ENCODE measurements at regions of chr20 and their contacts with region 1.

Region 1: GRCh38 chr20:36550797-36551299 is 9.5 kb downstream of the MYL9 start:
- DNase-seq: no peak
- H3K4me3 ChIP-seq: no peak overlapping the region
- H3K27ac ChIP-seq: peak overlapping the region; percentile 31 to 99 (median 62)
- H3K4me1 ChIP-seq: peaks cover 0 to 5% (median 0%) of the 10 kb centered on the region in 4 donors
- H3K27me3 ChIP-seq: no peaks in the 10 kb centered on the region
- CTCF ChIP-seq: no peak
- EP300 ChIP-seq: no peak
- POLR2A ChIP-seq: peak; percentile 17

Region 2: DNA sequence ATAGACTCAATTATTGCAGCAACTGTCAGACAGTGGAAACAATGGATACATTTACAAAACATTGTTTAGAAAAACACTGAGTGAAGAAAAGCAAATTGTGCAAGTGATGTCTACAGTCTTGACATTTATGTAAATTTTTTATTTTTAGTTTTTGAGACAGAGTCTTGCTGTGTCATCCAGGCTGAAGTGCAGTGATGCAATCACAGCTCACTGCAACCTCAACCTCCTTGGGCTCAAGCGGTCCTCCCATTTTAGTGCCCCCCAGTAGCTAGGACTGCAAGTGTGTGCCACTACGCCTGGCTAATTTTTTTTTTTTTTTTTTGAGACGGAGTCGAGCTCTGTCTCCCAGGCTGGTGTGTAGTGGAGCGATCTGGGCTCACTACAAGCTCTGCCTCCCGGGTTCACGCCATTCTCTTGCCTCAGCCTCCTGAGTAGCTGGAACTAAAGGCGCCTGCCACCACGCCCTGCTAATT is 572.8 kb before region 1 on chr20:
- in situ Hi-C with region 1: no loop called
- intact Hi-C with region 1: no loop called
- DNase-seq: no peak
- H3K4me3 ChIP-seq: no peak overlapping the region
- H3K27ac ChIP-seq: no peak overlapping the region
- H3K4me1 ChIP-seq: no peaks in the 10 kb centered on the region
- H3K27me3 ChIP-seq: no peaks in the 10 kb centered on the region
- CTCF ChIP-seq: no peak
- EP300 ChIP-seq: no peak
- POLR2A ChIP-seq: no peak

Region 3: GRCh38 chr20:36145877-36146707 is 404.8 kb before region 1 on chr20:
- in situ Hi-C with region 1: no loop called
- intact Hi-C with region 1: no loop called
- DNase-seq: no peak
- H3K4me3 ChIP-seq: no peak overlapping the region
- H3K27ac ChIP-seq: peak overlapping the region in 2 of 4 donors; percentile 28 to 51
- H3K4me1 ChIP-seq: peaks cover 0 to 11% (median 0%) of the 10 kb centered on the region in 4 donors
- H3K27me3 ChIP-seq: no peaks in the 10 kb centered on the region
- CTCF ChIP-seq: no peak
- EP300 ChIP-seq: no peak
- POLR2A ChIP-seq: no peak

Region 4: DNA sequence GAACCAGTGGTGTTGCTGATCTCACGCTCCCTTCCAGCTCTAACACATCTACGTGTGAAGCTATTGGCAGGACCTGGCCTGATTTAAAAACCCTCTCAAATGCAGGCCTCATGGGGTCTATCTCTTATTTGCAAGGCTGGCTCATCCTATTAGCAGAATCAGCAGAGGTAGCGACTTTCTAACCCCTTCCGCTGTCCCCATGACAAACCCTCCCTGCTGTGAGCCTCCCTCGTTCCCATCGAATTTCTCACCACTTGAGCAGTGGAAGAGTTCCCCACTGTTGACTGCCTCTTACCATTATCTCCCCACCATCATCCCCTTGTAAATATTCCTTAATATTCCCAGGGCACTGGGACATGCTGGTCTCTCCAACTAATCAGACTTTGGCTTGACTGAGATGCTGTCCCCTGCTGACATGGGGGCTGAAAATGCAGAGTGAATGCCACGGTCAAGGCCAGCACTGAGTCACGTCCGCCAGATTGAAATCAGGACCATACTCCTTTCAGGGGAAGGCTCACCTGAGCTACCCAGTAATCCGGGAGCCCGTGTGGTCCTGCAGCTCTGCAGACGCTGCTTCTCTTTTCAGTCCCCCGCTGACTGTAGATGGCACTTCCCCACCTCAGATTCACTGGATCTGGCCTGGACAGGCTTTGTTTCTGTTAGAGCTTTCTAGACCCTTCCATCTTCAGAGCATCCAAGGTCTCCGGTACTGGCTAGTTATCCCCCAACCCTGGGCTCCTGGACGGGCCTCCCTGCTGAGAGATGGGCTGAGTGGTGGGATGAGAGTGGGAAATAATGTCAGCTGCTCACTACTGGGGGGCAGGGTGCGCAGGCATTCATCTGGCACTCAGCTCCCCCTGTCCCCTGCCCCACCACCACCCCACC is 291.4 kb before region 1 on chr20:
- in situ Hi-C with region 1: no loop called
- intact Hi-C with region 1: no loop called
- DNase-seq: no peak
- H3K4me3 ChIP-seq: no peak overlapping the region
- H3K27ac ChIP-seq: no peak overlapping the region
- H3K4me1 ChIP-seq: no peaks in the 10 kb centered on the region
- H3K27me3 ChIP-seq: no peaks in the 10 kb centered on the region
- CTCF ChIP-seq: no peak
- EP300 ChIP-seq: no peak
- POLR2A ChIP-seq: no peak

Region 5: GRCh38 chr20:36421641-36422040 is 129.2 kb before region 1 on chr20:
- in situ Hi-C with region 1: no loop called
- intact Hi-C with region 1: no loop called
- DNase-seq: no peak
- H3K4me3 ChIP-seq: no peak overlapping the region
- H3K27ac ChIP-seq: no peak overlapping the region
- H3K4me1 ChIP-seq: no peaks in the 10 kb centered on the region
- H3K27me3 ChIP-seq: peaks cover 11% of the 10 kb centered on the region
- CTCF ChIP-seq: no peak
- EP300 ChIP-seq: no peak
- POLR2A ChIP-seq: no peak

Region 6: DNA sequence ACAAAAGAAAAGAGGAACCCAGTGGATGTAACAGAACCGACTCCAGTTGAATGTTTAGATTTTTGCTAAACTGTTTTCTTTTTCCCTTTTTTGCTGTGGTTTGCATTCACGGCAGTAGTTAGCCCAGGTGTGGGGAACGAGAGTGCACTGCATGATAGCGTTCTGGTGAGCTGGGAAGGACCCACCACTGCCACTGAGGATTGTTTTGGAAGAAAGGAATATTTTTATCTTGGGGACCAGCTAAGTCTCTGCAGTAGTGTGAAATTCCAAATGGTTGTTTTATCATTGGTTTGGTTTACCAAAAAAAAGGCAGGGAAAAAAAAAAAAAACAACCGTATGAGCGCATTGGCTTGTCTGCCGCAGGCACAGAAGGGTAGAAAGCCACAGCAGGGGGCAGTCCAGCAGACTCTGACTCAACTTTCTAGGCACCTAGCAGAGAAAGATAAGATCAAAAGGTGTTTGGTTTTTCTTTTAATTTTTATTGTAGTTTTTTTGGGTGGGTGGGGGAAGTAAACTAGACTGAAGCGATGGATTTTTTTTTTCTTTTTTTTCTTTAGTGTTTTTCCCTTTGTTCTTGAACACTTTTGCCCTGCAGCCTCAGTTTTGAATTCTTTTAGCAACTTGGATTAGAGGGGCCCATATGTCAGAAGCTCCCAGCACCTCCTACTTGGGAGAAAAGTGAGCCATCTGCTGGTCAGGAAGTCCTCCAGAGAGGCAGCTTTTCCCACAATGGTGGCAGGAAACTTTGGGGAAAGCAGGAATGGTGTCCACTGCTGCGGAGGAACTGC is 41.2 kb after region 1 on chr20:
- in situ Hi-C with region 1: no loop called
- intact Hi-C with region 1: loop called (anchors 5 kb)
- DNase-seq: no peak
- H3K4me3 ChIP-seq: no peak overlapping the region
- H3K27ac ChIP-seq: no peak overlapping the region
- H3K4me1 ChIP-seq: no peaks in the 10 kb centered on the region
- H3K27me3 ChIP-seq: no peaks in the 10 kb centered on the region
- CTCF ChIP-seq: peak in 4 of 5 experiments; percentile 16 to 34 (median 23)
- EP300 ChIP-seq: no peak
- POLR2A ChIP-seq: no peak